ENCODE measurements at regions of chr2 and their contacts with region 1.

Region 1: GRCh38 chr2:173415431-173416381 is 61.0 kb downstream of the CDCA7 start:
- DNase-seq: no peak
- ATAC-seq: 0 out of 2 replicates have a peak, but pooled peaks have one; percentile 28
- H3K4me3 Mint-ChIP-seq: no peak overlapping the region
- H3K27ac Mint-ChIP-seq: no peak overlapping the region
- H3K4me1 Mint-ChIP-seq: peaks cover 18% of the 10 kb centered on the region
- H3K27me3 Mint-ChIP-seq: no peaks in the 10 kb centered on the region
- CTCF ChIP-seq: no peak

Region 2: GRCh38 chr2:173584673-173585458 is 169.2 kb after region 1 on chr2:
- CTCF ChIA-PET with region 1: no interaction called
- POLR2A ChIA-PET with region 1: no interaction called
- DNase-seq: no peak
- ATAC-seq: no peak
- H3K4me3 Mint-ChIP-seq: no peak overlapping the region
- H3K27ac Mint-ChIP-seq: no peak overlapping the region
- H3K4me1 Mint-ChIP-seq: peaks cover 6% of the 10 kb centered on the region; the same call in 1 of the 2 replicates
- H3K27me3 Mint-ChIP-seq: no peaks in the 10 kb centered on the region
- CTCF ChIP-seq: no peak

Region 3: GRCh38 chr2:173749315-173749714 is 333.6 kb after region 1 on chr2:
- CTCF ChIA-PET with region 1: no interaction called
- POLR2A ChIA-PET with region 1: interaction called, 12 read pairs
- DNase-seq: no peak
- ATAC-seq: no peak
- H3K4me3 Mint-ChIP-seq: no peak overlapping the region
- H3K27ac Mint-ChIP-seq: no peak overlapping the region
- H3K4me1 Mint-ChIP-seq: peaks cover 57% of the 10 kb centered on the region
- H3K27me3 Mint-ChIP-seq: no peaks in the 10 kb centered on the region
- CTCF ChIP-seq: no peak